ENCODE measurements at regions of chr2 and their contacts with region 1.

Region 1: DNA sequence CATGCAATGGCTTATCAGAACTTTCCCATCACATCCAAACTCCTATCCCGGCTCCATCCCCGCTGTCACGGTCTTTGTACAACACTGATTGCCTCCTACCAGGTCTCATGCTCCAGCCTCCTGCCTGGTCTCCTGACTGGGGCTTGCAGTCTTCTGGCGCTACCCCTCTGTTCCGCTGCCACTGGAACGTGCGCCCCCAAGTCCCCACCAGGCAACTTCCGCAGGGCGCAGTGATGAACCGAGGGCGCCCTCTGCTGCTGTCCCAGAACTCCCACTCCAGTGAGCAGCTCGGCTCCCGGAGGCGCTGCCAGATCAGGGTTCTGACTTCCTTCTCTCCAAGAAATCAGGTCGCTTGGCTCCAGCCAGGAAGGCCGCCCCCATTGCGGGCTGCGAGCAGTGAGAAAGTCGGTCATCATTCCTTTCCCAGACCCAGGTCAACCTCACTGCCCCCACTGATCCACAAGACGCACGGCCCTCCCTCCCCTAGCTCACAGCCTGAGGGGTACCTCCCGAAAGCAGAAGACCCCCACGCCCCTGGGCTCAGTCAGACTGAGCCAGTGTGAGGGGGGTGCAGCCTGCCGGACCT is 43.9 kb upstream of the RAB11FIP5 start:
- DNase-seq: peak; percentile 76
- ATAC-seq: peak; percentile 81

Region 2: GRCh38 chr2:73089650-73090030 is 67.0 kb before region 1 on chr2:
- intact Hi-C with region 1: loop called (anchors 2 kb)
- DNase-seq: no peak
- ATAC-seq: peak; percentile 84

Region 3: GRCh38 chr2:73134471-73134870 is 22.2 kb before region 1 on chr2:
- intact Hi-C with region 1: no loop called
- DNase-seq: no peak
- ATAC-seq: no peak

Measured in sciatic nerve (tissue), 2 donors.